ENCODE measurements at regions of chr4 and their contacts with region 1.

Region 1: DNA sequence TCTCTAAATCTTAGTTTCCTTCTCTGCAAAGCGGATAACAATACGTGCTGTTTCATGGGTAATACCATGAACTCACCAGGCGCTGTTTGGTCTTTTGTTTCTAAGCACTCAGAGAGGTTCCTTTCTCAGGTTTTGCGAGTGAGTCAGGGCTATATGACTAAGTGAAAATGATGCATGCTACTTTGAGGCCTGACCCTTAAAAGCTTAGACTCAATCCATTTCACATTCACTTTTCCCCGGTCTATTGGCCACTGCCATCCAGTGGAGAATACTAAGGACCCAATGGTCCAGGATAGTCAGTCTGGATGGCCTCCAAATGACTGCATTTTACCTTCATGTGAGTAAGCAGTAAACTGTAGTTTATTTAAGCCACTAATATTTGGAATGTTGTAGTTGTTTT is 400.8 kb upstream of the SLIT2 start:
- DNase-seq: peak; percentile 77
- H3K4me3 Mint-ChIP-seq: no peak overlapping the region
- H3K27ac Mint-ChIP-seq: peak overlapping the region; percentile 33
- H3K4me1 Mint-ChIP-seq: peaks cover 7% of the 10 kb centered on the region
- H3K27me3 Mint-ChIP-seq: no peaks in the 10 kb centered on the region
- CTCF ChIP-seq: no peak

Region 2: GRCh38 chr4:19224820-19225219 is 626.1 kb before region 1 on chr4:
- CTCF ChIA-PET with region 1: no interaction called
- POLR2A ChIA-PET with region 1: no interaction called
- intact Hi-C with region 1: loop called (anchors 10 kb)
- DNase-seq: peak; percentile 27
- H3K4me3 Mint-ChIP-seq: no peak overlapping the region
- H3K27ac Mint-ChIP-seq: no peak overlapping the region
- H3K4me1 Mint-ChIP-seq: peaks cover 7% of the 10 kb centered on the region
- H3K27me3 Mint-ChIP-seq: no peaks in the 10 kb centered on the region
- CTCF ChIP-seq: peak; percentile 26

Region 3: DNA sequence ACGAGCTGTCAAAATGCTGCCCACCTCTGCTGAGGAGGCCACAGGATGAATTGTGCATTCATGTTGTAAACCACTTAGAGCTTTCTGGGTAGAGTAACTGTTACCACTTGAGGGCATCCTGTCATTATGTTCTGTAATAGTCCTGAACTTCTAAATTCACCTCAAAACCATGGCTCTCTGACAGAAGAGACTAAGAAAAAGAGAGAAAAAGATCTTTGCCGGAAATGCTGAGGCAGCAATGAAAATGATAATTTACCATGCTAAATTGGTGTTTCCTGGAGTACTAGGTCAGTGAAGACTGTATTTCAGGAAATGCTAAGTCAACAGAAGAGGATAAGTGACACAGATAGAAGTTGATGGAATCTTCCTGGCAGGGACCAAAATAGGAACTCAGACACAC is 541.5 kb before region 1 on chr4:
- CTCF ChIA-PET with region 1: no interaction called
- POLR2A ChIA-PET with region 1: no interaction called
- intact Hi-C with region 1: loop called (anchors 1 kb)
- DNase-seq: peak; percentile 44
- H3K4me3 Mint-ChIP-seq: no peak overlapping the region
- H3K27ac Mint-ChIP-seq: no peak overlapping the region
- H3K4me1 Mint-ChIP-seq: peaks cover 8% of the 10 kb centered on the region
- H3K27me3 Mint-ChIP-seq: no peaks in the 10 kb centered on the region
- CTCF ChIP-seq: peak; percentile 58

Region 4: GRCh38 chr4:19382993-19383756 is 467.7 kb before region 1 on chr4:
- CTCF ChIA-PET with region 1: no interaction called
- POLR2A ChIA-PET with region 1: no interaction called
- intact Hi-C with region 1: loop called (anchors 5 kb)
- DNase-seq: peak; percentile 89
- H3K4me3 Mint-ChIP-seq: no peak overlapping the region
- H3K27ac Mint-ChIP-seq: peak overlapping the region; percentile 90
- H3K4me1 Mint-ChIP-seq: peaks cover 35% of the 10 kb centered on the region
- H3K27me3 Mint-ChIP-seq: no peaks in the 10 kb centered on the region
- CTCF ChIP-seq: no peak

Region 5: DNA sequence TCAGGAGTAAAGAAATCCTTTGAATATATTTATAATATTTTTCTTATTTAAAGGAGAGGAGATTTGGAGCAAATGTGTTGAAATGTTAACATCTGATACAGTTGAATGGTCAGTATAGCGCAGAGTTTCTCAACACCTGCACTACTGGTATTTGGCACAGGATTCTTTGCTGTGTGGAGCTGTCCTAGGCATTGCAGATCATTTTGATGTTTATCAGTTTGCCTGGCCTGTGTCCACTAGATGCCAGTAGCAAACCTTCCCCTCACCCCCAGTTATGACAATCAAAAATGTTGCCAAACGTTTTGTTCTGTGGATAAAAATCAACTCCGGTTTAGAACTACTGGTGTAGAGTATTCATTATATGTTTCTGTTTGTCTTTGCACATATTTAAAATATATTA is 364.5 kb before region 1 on chr4:
- CTCF ChIA-PET with region 1: no interaction called
- POLR2A ChIA-PET with region 1: no interaction called
- intact Hi-C with region 1: loop called (anchors 5 kb)
- DNase-seq: peak; percentile 53
- H3K4me3 Mint-ChIP-seq: no peak overlapping the region
- H3K27ac Mint-ChIP-seq: no peak overlapping the region
- H3K4me1 Mint-ChIP-seq: no peaks in the 10 kb centered on the region
- H3K27me3 Mint-ChIP-seq: no peaks in the 10 kb centered on the region
- CTCF ChIP-seq: peak; percentile 25

Measured in MCF 10A (cell line).